ENCODE measurements at regions of chr2 and their contacts with region 1.

Region 1: GRCh38 chr2:213151437-213152064 is at the start of gene IKZF2:
- DNase-seq: peak; percentile 86
- ATAC-seq: peak; percentile 91
- total RNA-seq, gene IKZF2: 22.1 TPM

Region 2: DNA sequence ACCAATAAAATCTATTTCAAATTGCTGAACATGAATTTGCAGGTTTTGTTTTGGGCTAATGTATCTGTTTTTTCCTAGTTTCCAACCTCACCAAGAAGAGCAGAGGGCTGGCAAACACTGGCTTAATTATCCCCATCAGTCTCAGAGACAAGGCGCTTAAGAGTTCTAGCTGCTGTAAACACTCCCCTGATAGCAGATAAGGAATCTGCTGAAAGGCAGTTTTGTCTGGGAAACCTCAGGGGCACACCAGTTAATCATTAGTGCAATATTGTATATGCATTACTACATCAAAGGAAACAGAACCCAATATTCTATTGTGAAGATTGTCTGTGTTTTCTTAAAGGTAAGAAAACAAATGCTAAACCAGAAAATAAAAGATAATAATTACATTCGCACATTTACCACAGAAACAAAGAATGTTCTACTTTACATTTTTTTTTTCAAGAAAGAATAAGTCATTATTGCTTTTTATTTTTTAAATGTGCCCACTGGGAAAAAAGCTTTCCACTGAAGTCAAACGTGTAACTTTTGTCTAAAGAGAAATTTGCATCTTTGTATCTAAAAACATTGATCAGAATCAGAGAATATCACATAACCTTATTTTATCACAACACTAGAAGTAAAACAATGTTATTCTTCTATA is 792.0 kb before region 1 on chr2:
- intact Hi-C with region 1: no loop called
- DNase-seq: no peak
- ATAC-seq: no peak

Region 3: DNA sequence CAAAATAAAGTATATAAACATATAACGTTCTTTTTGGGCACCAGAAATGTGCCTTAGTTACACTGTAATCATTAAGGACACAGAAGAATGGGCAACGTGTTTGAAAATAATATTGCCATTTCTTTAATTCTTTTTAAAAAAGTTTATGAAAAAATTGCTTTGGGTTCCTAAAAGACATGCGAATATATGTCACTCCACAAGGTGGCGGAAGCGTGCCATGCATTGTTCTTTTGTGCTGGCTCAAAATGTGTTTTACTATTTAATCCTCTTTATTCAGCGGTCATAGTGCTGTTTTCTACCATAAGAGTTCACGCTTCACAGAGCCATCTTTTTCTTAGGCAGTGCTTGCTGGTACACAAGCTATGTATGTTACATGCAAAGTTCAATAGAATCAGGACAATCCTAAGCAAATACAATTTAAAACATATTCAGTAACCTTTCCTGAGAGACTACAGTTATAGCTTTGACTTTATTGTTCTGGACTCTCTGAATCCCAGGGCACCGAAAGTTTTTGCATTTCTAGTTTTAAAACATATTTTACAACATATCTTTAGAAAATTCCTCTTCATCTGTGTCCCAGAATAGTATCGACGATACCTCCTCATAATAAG is 465.2 kb before region 1 on chr2:
- intact Hi-C with region 1: loop called (anchors 5 kb)
- DNase-seq: peak; percentile 72
- ATAC-seq: peak; percentile 55